ENCODE measurements at regions of chr3 and their contacts with region 1.

Region 1: DNA sequence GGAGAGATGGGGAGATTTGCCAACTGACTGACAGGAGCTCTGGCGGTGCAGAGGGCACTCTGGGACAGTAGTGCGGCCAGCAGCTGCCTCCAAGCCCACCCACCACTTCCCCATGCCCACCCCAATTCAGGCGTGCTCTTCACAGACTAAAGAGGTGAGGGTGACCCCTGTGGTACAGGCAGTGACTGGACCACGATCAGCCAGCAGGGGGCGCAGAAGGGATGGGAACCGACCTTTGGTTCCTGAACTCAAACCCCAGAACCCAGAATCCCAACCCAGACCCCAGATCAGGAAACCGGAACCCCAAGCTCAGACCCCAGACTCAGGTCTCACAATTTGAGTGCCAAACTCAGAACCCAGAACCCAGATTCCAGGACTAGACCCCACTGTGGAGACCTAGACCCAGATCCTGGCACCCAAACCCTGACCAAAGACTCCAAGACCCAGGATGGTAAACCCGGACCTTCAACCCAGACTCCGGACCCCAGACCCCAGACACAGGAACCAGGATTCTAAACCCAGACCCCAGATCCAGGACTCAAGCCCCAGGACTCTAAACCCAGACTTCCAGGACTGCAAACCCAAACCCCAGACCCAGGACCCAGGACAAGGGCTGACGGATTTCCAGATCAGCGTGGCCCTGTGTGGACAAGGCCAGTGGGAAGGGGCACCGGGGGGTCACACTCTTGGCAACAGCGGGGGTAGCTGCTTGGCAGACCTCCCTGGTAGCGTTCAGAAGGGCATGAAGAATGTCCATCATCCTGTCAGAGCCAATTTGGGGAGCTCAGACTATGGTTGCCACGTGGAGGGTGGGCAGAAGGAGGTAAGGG is 3.7 kb upstream of the MYL3 start:
- DNase-seq: peak; percentile 87
- ATAC-seq: peak; percentile 81
- H3K4me3 Mint-ChIP-seq: no peak overlapping the region
- H3K27ac Mint-ChIP-seq: no peak overlapping the region
- H3K4me1 Mint-ChIP-seq: no peaks in the 10 kb centered on the region
- H3K27me3 Mint-ChIP-seq: no peaks in the 10 kb centered on the region
- CTCF ChIP-seq: peak; percentile 84

Region 2: GRCh38 chr3:46730819-46731218 is 136.1 kb before region 1 on chr3:
- CTCF ChIA-PET with region 1: no interaction called
- POLR2A ChIA-PET with region 1: no interaction called
- intact Hi-C with region 1: no loop called
- DNase-seq: no peak
- ATAC-seq: no peak
- H3K4me3 Mint-ChIP-seq: no peak overlapping the region
- H3K27ac Mint-ChIP-seq: no peak overlapping the region
- H3K4me1 Mint-ChIP-seq: no peaks in the 10 kb centered on the region
- H3K27me3 Mint-ChIP-seq: peaks cover 5% of the 10 kb centered on the region
- CTCF ChIP-seq: no peak

Region 3: GRCh38 chr3:46763168-46763567 is 103.8 kb before region 1 on chr3:
- CTCF ChIA-PET with region 1: no interaction called
- POLR2A ChIA-PET with region 1: no interaction called
- intact Hi-C with region 1: no loop called
- DNase-seq: no peak
- ATAC-seq: no peak
- H3K4me3 Mint-ChIP-seq: no peak overlapping the region
- H3K27ac Mint-ChIP-seq: no peak overlapping the region
- H3K4me1 Mint-ChIP-seq: no peaks in the 10 kb centered on the region
- H3K27me3 Mint-ChIP-seq: no peaks in the 10 kb centered on the region
- CTCF ChIP-seq: no peak

Region 4: GRCh38 chr3:46882377-46883053 is 15.6 kb after region 1 on chr3:
- CTCF ChIA-PET with region 1: interaction called, 23 read pairs
- POLR2A ChIA-PET with region 1: interaction called, 3 read pairs
- intact Hi-C with region 1: no loop called
- DNase-seq: peak; percentile 24
- ATAC-seq: no peak
- H3K4me3 Mint-ChIP-seq: peak overlapping the region; percentile 53
- H3K27ac Mint-ChIP-seq: no peak overlapping the region
- H3K4me1 Mint-ChIP-seq: peaks cover 3% of the 10 kb centered on the region
- H3K27me3 Mint-ChIP-seq: peaks cover 42% of the 10 kb centered on the region
- CTCF ChIP-seq: no peak

Measured in activated CD8-positive, alpha-beta T cell treated with anti-CD3 and anti-CD28 coated beads for 36 hours (primary cell).